Common myeloid progenitor, CD34-positive (primary cell): ENCODE measurements at regions of chr1 and their contacts with region 1.

Region 1: DNA sequence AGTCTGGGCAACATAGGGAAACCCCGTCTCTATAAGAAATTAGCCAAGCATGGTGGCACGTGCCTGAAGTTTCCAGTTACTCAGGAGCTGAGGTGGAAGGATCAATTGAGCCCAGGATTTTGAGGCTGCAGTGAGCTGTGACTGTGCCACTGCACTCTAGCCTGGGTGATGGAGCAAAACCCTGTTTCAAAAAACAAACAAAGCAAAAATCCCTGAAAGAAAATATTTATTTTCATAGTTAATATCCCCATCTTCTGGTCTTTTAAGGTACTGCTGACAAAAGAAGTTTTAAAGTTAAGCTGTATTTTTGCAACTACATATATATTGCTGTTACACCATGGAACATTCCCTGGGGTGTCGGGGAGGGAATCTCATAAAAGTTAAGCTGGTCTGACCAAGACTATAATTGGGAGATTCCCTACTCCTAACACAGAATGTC is 26.0 kb downstream of the VAMP4 start:
- DNase-seq: peak in 2 of 3 donors; percentile 36 to 49
- H3K4me3 ChIP-seq: no peak overlapping the region
- H3K27ac ChIP-seq: no peak overlapping the region
- H3K4me1 ChIP-seq: no peaks in the 10 kb centered on the region
- H3K27me3 ChIP-seq: no peaks in the 10 kb centered on the region

Region 2: GRCh38 chr1:171550050-171550449 is 165.8 kb before region 1 on chr1:
- CTCF ChIA-PET with region 1: no interaction called
- POLR2A ChIA-PET with region 1: no interaction called
- DNase-seq: no peak
- H3K4me3 ChIP-seq: no peak overlapping the region
- H3K27ac ChIP-seq: no peak overlapping the region
- H3K4me1 ChIP-seq: no peaks in the 10 kb centered on the region
- H3K27me3 ChIP-seq: no peaks in the 10 kb centered on the region

Region 3: DNA sequence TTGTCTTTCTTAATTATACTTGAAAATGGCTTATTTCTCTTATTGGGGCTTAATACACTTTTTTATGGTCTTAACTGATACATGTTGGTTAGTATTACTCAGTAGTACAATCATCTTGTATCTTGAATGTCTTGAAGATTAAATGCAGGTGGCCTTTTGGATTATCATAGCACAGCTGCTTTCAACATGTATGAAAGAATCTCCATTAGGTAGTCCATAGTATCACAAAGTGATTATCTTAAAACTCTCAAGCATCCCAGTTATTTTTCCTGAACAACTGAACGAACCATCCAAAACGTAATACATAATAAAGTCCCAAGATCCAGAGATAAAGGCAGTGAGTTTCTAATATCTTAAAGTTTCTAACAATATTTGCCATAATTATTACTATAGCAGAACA is 145.5 kb before region 1 on chr1:
- CTCF ChIA-PET with region 1: no interaction called
- POLR2A ChIA-PET with region 1: no interaction called
- DNase-seq: no peak
- H3K4me3 ChIP-seq: no peak overlapping the region
- H3K27ac ChIP-seq: no peak overlapping the region
- H3K4me1 ChIP-seq: no peaks in the 10 kb centered on the region
- H3K27me3 ChIP-seq: no peaks in the 10 kb centered on the region

Region 4: DNA sequence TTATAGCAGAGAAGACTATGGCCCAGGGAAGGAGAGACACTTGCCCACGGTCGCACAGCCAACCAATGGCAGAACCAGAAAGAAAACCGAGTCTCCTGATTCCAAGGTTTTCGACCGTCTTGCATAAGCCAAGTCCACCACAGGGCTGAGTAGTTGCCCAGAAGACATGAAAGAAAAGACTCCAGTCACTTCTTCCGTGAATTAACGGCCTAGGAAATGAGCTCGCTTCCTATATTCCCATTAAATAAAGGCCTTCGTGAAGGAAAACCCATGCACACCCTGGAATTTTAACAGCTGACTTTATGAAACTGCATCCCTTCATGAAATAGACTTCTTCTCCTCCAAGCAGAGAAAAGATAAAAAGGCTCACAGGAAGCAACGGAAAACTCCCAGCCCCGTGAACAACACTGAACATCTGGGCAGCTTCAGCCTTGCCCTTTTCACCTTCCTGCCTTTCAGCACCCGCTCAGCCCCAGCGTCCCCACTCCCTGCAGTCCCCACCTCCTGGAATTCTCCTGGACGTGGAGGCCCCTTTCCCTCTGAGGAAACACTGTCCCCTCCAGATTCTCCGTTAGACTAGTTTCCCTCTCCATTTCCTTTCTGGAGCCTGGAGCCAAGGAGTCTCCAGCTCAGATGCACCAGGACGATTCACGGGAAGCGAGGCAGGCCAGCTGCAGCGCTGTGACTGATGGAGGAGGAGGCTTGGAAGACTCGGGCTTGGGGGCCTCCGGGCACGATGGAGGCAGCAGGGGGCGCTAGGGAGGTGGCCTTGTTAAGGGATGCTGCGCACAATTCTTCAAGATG is 60.7 kb before region 1 on chr1:
- CTCF ChIA-PET with region 1: interaction called, 19 read pairs
- POLR2A ChIA-PET with region 1: no interaction called
- DNase-seq: peak; percentile 62 to 84 (median 81)
- H3K4me3 ChIP-seq: peak overlapping the region in 6 of 7 experiments; percentile 0 to 72 (median 38)
- H3K27ac ChIP-seq: no peak overlapping the region
- H3K4me1 ChIP-seq: peaks cover 0 to 15% (median 9%) of the 10 kb centered on the region in 4 experiments
- H3K27me3 ChIP-seq: peaks cover 0 to 2% (median 0%) of the 10 kb centered on the region in 5 experiments

Region 5: GRCh38 chr1:171754353-171754705 is 38.5 kb after region 1 on chr1:
- CTCF ChIA-PET with region 1: no interaction called
- POLR2A ChIA-PET with region 1: no interaction called
- DNase-seq: no peak
- H3K4me3 ChIP-seq: no peak overlapping the region
- H3K27ac ChIP-seq: no peak overlapping the region
- H3K4me1 ChIP-seq: no peaks in the 10 kb centered on the region
- H3K27me3 ChIP-seq: no peaks in the 10 kb centered on the region